ENCODE measurements at regions of chr16 and their contacts with region 1.

Region 1: DNA sequence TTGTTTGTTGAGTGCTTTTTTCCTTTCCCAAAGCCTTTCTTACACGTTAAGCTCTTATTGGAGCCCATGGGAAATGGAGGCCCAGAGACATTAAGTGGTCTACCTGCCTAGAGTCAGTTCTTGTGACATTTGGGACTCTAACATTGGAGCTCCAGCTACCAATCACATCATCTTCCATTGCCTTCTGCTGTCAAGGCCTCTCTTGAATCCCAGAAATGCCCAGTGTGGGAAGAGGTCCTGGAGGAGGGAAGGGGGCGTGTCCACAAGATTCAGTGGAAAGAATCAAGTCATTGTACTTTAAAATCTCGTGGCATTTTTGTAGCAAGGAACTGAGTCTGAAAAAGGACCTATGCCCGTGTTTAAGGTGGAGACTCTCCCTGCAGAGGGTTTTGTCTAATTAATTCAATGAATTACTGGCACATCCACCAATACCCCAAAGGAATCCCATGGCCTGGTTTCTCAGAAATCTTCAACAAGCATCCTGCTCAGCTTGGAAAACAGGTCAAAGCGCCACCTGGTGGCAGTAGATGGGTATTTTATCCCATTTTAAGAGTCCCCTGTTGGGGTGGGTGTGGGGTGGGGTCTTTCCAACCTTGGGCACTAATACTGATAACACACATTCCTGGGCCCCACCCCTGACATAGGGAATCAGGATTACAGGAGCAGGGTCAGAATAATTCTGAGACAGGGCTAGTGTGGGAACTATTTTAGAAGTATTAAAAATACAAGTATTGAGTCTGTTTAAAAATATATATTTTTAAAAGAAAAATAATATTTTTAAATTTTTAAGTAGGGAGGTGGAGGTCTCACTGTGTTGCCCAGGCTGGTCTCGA is 24.6 kb downstream of the GPT2 start:
- DNase-seq: peak; percentile 66
- ATAC-seq: peak; percentile 41
- H3K4me3 Mint-ChIP-seq: no peak overlapping the region
- H3K27ac Mint-ChIP-seq: no peak overlapping the region
- H3K4me1 Mint-ChIP-seq: peaks cover 13% of the 10 kb centered on the region
- H3K27me3 Mint-ChIP-seq: no peaks in the 10 kb centered on the region

Region 2: DNA sequence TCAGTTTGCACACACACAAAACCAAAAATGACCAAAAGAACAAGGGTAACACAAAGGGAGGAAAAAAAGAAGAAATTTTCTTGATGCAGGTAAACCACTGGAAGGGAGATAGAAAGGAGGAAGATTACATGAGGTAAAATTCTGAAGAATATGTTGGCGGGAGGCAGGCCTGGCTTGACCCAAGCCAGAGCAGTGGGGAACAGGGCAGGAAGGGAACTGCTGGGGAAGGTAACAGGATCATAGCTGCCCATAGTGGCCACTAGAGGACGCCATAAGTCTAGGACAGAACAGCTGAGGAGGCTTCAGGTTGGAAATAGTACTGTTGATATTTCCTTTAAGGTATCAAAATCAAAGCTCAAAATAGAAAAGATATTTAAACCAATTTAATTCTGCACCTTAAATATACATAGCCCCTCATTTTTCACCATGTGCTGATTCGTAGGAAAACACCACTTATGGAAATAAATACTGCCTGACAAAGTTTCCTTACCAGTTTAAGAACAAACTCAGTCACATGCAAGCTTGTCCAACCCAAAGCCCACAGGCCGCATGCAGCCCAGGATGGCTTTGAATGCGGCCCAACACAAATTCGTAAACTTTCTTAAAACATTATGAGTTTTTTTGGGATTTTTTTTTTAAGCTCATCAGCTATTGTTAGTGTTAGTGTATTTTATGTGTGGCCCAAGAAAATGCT is 235.3 kb before region 1 on chr16:
- CTCF ChIA-PET with region 1: interaction called, 27 read pairs
- DNase-seq: peak; percentile 66
- ATAC-seq: peak; percentile 97
- H3K4me3 Mint-ChIP-seq: no peak overlapping the region
- H3K27ac Mint-ChIP-seq: no peak overlapping the region
- H3K4me1 Mint-ChIP-seq: no peaks in the 10 kb centered on the region
- H3K27me3 Mint-ChIP-seq: no peaks in the 10 kb centered on the region

Region 3: GRCh38 chr16:46853713-46854443 is 54.9 kb before region 1 on chr16:
- CTCF ChIA-PET with region 1: interaction called, 97 read pairs
- DNase-seq: peak; percentile 79
- ATAC-seq: peak; percentile 76
- H3K4me3 Mint-ChIP-seq: no peak overlapping the region
- H3K27ac Mint-ChIP-seq: no peak overlapping the region
- H3K4me1 Mint-ChIP-seq: no peaks in the 10 kb centered on the region
- H3K27me3 Mint-ChIP-seq: peaks cover 5% of the 10 kb centered on the region

Region 4: DNA sequence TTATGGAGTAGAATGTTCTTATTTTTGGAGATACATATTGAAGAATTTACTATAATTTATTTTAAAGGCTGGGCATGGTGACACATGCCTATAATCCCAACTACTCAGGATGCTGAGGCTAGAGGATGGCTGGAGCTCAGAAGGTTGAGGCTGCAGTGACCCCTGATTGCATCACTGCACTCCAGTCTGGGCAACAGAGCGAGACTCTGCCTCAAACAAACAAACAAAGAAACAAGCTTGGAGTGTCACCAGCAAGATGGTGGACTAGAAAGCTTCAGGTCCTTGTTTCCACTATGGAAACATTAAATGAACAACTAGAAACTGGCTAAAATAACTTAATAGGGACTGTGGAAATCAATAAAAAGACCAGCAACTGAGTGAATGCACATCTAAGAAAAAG is 42.5 kb before region 1 on chr16:
- CTCF ChIA-PET with region 1: no interaction called
- DNase-seq: no peak
- ATAC-seq: no peak
- H3K4me3 Mint-ChIP-seq: no peak overlapping the region
- H3K27ac Mint-ChIP-seq: no peak overlapping the region
- H3K4me1 Mint-ChIP-seq: peaks cover 17% of the 10 kb centered on the region
- H3K27me3 Mint-ChIP-seq: peaks cover 2% of the 10 kb centered on the region

Region 5: GRCh38 chr16:46883690-46884512 is 24.9 kb before region 1 on chr16 and contains the start of gene GPT2:
- CTCF ChIA-PET with region 1: interaction called, 31 read pairs
- DNase-seq: peak; percentile 92
- ATAC-seq: peak; percentile 98
- H3K4me3 Mint-ChIP-seq: peak within 1 kb of the TSS; percentile 79
- H3K27ac Mint-ChIP-seq: peak within 1 kb of the TSS; percentile 73
- H3K4me1 Mint-ChIP-seq: peaks cover 14% of the 10 kb centered on the region
- H3K27me3 Mint-ChIP-seq: peaks cover 31% of the 10 kb centered on the region
- total RNA-seq, gene GPT2: 9.6 to 21.4 TPM

Measured in activated CD8-positive, alpha-beta memory T cell treated with anti-CD3 and anti-CD28 coated beads, Interleukin-2, amount 10 ng/mL, durations not matched to agents 7 days and 5 days (primary cell).